ENCODE measurements at regions of chr3 and their contacts with region 1.

Region 1: DNA sequence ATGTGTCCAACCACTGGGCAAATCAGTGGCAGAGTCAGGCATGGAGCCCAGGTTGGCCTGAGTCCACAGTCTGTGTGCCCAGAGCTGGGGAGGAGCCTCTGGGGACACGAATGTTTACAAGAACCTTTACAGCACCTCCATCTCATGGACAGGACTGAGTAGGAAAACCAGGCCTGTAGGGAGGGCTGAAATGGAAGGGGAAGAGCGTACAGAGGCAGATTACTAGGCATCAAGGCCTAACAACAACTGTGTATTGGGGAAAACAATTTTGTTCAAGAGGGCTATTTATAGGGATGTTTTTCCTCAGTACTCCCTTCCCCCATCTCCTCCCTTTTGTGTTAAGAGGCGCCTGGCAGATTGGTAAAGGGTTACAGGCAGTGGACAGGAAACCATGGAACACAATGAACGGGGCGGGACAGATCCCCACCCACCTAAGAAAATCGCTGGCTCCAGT is 15.1 kb upstream of the ARHGAP31 start:
- DNase-seq: peak; percentile 84

Region 2: DNA sequence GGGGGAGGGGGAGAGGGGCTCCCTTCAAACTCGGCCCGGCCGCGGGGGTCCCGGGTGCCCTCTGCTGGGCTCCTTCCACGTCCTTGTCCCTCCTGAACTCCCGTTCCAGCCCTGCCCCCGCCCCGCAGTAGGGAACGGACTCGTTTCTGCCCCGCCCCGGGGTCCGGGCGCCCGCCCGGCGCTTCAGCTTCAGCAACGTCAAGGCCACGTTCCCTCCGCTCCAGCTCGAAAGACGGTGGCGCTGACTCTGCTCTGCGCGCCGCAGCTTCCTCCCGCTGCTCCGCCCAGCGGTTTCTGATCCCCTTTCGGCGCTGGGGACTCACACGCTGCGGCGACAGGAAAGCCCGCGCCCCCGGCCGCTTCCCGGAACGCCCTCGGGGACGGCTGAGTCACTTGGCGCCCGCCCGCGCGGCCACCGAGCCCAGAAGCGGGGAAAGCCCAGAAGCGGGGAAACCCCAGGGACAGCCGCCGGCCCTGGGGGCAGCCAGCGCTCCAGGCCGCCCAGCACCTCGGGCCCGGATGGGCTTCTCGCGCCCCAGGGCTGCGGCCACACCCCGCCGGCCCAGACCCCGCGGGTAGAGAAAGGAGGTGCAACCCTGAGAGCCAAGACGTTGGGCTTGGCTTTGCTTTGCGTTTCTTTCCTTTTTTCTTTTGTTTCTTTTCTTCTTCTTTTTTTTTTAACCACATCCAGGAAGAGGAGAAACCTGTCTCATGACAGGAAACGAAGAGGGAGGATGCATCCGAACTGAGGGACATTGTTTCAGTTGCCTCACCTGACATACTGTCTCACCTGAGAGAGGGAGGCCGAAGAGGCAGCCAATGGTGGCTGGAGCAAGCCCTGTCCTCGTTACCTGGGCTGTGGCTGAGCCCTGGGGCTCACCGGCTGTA is 44.0 kb after region 1 on chr3:
- intact Hi-C with region 1: loop called (anchors 5 kb)
- DNase-seq: peak; percentile 96

Region 3: DNA sequence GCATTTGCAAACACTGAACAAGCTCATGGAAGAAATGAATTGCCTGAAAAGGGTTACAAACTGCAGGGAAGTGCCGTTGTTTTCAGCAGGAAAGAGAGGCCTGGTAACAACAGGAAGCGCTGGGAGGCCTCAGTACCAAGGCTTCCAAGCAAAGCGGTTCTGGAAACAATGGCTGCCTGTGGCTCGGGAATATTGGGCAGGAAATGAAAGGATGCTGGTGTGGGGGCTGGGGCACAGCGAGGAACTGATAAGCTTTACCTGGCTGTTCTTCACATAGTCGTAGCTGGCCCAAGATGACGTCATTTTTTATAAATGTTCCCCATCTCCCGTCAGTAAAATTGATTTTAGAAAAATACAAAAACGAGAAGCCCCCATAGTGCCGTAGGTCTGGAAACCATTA is 71.0 kb after region 1 on chr3:
- intact Hi-C with region 1: loop called (anchors 2 kb)
- DNase-seq: peak; percentile 80